ENCODE measurements at regions of chr3 and their contacts with region 1.

Region 1: GRCh38 chr3:195850857-195851543 is 39.3 kb upstream of the MUC4 start:
- DNase-seq: peak; percentile 96
- H3K4me3 Mint-ChIP-seq: peak overlapping the region; percentile 18
- H3K27ac Mint-ChIP-seq: no peak overlapping the region
- H3K4me1 Mint-ChIP-seq: peaks cover 2% of the 10 kb centered on the region
- H3K27me3 Mint-ChIP-seq: no peaks in the 10 kb centered on the region

Region 2: GRCh38 chr3:195558602-195559001 is 292.4 kb before region 1 on chr3:
- CTCF ChIA-PET with region 1: interaction called, 11 read pairs
- intact Hi-C with region 1: loop called (anchors 1 kb)
- DNase-seq: peak; percentile 67
- H3K4me3 Mint-ChIP-seq: no peak overlapping the region
- H3K27ac Mint-ChIP-seq: no peak overlapping the region
- H3K4me1 Mint-ChIP-seq: peaks cover 37% of the 10 kb centered on the region
- H3K27me3 Mint-ChIP-seq: no peaks in the 10 kb centered on the region

Region 3: GRCh38 chr3:195748661-195749060 is 102.3 kb before region 1 on chr3:
- CTCF ChIA-PET with region 1: interaction called, 4 read pairs
- intact Hi-C with region 1: loop called (anchors 10 kb)
- DNase-seq: no peak
- H3K4me3 Mint-ChIP-seq: no peak overlapping the region
- H3K27ac Mint-ChIP-seq: no peak overlapping the region
- H3K4me1 Mint-ChIP-seq: peaks cover 10% of the 10 kb centered on the region
- H3K27me3 Mint-ChIP-seq: no peaks in the 10 kb centered on the region

Region 4: GRCh38 chr3:195839282-195840010 is 11.6 kb before region 1 on chr3:
- CTCF ChIA-PET with region 1: interaction called, 12 read pairs
- intact Hi-C with region 1: no loop called
- DNase-seq: no peak
- H3K4me3 Mint-ChIP-seq: no peak overlapping the region
- H3K27ac Mint-ChIP-seq: no peak overlapping the region
- H3K4me1 Mint-ChIP-seq: no peaks in the 10 kb centered on the region
- H3K27me3 Mint-ChIP-seq: no peaks in the 10 kb centered on the region

Region 5: GRCh38 chr3:195909644-195910508 is 58.9 kb after region 1 on chr3:
- CTCF ChIA-PET with region 1: interaction called, 25 read pairs
- intact Hi-C with region 1: no loop called
- DNase-seq: peak; percentile 89
- H3K4me3 Mint-ChIP-seq: peak overlapping the region; percentile 70
- H3K27ac Mint-ChIP-seq: no peak overlapping the region
- H3K4me1 Mint-ChIP-seq: peaks cover 33% of the 10 kb centered on the region
- H3K27me3 Mint-ChIP-seq: no peaks in the 10 kb centered on the region

Measured in activated naive CD4-positive, alpha-beta T cell treated with anti-CD3 and anti-CD28 coated beads for 36 hours (primary cell).